MCF 10A (cell line): ENCODE measurements at regions of chr5 and their contacts with region 1.

Region 1: GRCh38 chr5:149775785-149776184 is 45.7 kb downstream of the PPARGC1B start:
- DNase-seq: peak; percentile 63
- H3K4me3 Mint-ChIP-seq: no peak overlapping the region
- H3K27ac Mint-ChIP-seq: no peak overlapping the region
- H3K4me1 Mint-ChIP-seq: peaks cover 43% of the 10 kb centered on the region
- H3K27me3 Mint-ChIP-seq: no peaks in the 10 kb centered on the region
- CTCF ChIP-seq: peak; percentile 61

Region 2: DNA sequence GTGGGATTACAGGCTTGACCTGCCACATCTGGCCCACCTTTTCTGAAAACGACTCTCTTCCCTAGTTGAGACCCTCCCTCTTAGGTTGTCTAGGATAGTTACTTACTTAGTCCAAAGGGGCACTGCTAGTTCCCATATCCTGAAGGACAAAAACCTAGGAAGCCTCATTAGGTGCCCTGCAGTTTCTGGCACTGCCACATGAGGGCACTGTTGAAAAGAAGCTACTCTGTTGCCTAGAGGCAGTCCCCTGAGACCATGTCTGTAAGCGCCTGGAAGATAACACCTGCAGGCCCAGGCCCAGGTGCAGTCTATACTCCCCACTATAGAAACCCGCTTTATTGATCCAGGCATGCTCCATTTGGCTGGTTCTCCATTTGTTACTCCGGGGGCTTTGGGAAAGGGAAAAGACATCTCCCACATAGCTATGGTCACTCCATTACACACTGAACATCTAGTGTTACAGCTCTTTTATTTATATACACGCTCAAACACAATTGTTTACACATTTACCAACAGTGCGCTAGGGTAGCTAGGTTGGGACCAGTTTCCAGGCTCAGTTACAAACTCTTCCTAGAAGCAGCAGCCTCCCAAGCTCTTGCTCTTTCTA is 119.1 kb before region 1 on chr5:
- CTCF ChIA-PET with region 1: interaction called, 17 read pairs
- POLR2A ChIA-PET with region 1: no interaction called
- intact Hi-C with region 1: no loop called
- DNase-seq: peak; percentile 80
- H3K4me3 Mint-ChIP-seq: no peak overlapping the region
- H3K27ac Mint-ChIP-seq: no peak overlapping the region
- H3K4me1 Mint-ChIP-seq: no peaks in the 10 kb centered on the region
- H3K27me3 Mint-ChIP-seq: peaks cover 21% of the 10 kb centered on the region
- CTCF ChIP-seq: peak; percentile 85

Region 3: GRCh38 chr5:149759986-149760853 is 15.6 kb before region 1 on chr5:
- CTCF ChIA-PET with region 1: interaction called, 17 read pairs
- POLR2A ChIA-PET with region 1: no interaction called
- intact Hi-C with region 1: no loop called
- DNase-seq: no peak
- H3K4me3 Mint-ChIP-seq: no peak overlapping the region
- H3K27ac Mint-ChIP-seq: no peak overlapping the region
- H3K4me1 Mint-ChIP-seq: peaks cover 22% of the 10 kb centered on the region
- H3K27me3 Mint-ChIP-seq: no peaks in the 10 kb centered on the region
- CTCF ChIP-seq: no peak

Region 4: DNA sequence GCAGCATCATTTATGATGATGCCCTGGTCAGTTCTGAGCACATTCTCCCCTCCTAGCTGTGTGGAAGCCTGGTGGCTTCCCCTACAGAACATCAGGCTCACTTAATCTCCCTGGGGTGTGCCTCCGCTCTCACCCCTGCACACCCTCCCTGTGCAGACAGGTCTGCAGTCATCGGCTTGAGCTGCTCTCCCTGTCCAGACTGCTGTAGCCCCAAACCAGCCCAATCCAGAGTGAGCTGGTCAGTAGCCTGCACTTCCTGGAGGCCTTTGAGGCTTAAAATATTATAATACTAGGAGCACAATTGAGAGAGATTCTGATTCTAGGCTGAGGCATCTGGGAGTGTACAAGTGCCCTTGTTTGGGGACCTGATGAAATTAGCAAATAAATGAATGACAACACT is 14.5 kb after region 1 on chr5:
- CTCF ChIA-PET with region 1: interaction called, 12 read pairs
- POLR2A ChIA-PET with region 1: interaction called, 4 read pairs
- intact Hi-C with region 1: no loop called
- DNase-seq: peak; percentile 23
- H3K4me3 Mint-ChIP-seq: no peak overlapping the region
- H3K27ac Mint-ChIP-seq: no peak overlapping the region
- H3K4me1 Mint-ChIP-seq: peaks cover 27% of the 10 kb centered on the region
- H3K27me3 Mint-ChIP-seq: no peaks in the 10 kb centered on the region
- CTCF ChIP-seq: no peak

Region 5: DNA sequence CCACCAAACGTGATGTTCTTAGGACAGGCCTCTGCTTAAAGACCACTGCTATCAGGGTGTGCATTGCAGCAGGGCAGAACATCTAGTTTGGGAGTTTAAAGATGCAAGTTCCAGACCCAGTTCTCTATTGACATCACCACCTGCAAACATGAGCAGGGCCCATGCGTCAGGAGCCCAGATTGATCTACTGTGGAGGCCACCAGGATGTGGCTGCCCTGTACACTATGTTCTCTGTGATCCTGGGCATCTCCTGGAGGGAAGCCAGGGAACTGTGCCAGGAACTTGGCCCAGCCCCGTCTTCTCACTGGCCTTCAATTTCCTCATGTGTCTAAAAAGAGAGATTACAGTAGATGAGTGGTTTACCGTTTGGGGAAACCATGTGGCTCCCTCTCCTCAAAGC is 81.7 kb after region 1 on chr5:
- CTCF ChIA-PET with region 1: no interaction called
- POLR2A ChIA-PET with region 1: no interaction called
- intact Hi-C with region 1: no loop called
- DNase-seq: peak; percentile 99
- H3K4me3 Mint-ChIP-seq: peak overlapping the region; percentile 36
- H3K27ac Mint-ChIP-seq: peak overlapping the region; percentile 93
- H3K4me1 Mint-ChIP-seq: peaks cover 40% of the 10 kb centered on the region
- H3K27me3 Mint-ChIP-seq: no peaks in the 10 kb centered on the region
- CTCF ChIP-seq: no peak